HEK293 (cell line): ENCODE measurements at regions of chr19 and their contacts with region 1.

Region 1: GRCh38 chr19:55407800-55408532 is 378 bp upstream of the UBE2S start:
- H3K4me3 ChIP-seq: peak overlapping the region; percentile 96
- H3K27ac ChIP-seq: peak overlapping the region; percentile 99
- H3K4me1 ChIP-seq: peaks cover 9% of the 10 kb centered on the region
- CTCF ChIP-seq: no peak

Region 2: GRCh38 chr19:55146078-55146704 is 261.8 kb before region 1 on chr19:
- CTCF ChIA-PET with region 1: interaction called, 10 read pairs
- POLR2A ChIA-PET with region 1: interaction called, 11 read pairs
- H3K4me3 ChIP-seq: peak overlapping the region; percentile 46
- H3K27ac ChIP-seq: no peak overlapping the region
- H3K4me1 ChIP-seq: no peaks in the 10 kb centered on the region
- CTCF ChIP-seq: peak; percentile 61; the same call in 1 of the 2 replicates

Region 3: DNA sequence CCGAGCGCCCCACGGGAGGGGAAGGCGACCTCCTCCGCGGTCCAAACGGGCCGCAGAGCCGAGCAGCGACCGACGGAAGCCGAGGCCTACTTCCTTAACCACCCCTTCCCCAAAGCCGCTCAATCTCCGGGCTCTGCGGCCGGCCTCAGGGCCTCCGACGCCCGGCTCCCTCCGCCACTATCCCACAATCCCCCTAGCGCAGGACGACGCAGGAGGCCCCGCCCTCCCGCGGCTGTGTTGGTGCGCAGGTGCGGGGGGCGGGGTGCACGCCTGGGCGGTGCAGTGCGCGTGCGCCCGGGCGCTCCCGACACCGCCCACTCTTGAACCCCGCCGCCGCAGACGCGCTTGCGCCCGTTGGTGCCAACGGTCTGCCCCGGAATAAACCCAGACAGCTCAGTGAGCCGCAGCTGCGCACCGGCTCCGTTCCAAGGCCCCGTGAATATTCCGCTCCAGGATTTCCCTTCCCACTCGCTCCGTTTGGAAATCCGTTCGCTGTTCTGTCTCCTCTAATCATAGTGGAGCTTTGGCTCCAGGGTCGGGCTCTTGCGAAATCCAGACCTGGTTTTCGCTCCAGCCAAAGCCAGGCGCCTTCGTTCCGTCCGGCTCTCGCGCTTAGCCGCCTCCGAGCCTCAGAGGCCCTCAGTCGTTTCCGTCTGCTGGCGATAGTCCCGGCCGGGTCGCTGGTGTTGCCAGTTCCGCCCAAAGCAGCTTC is 149.0 kb before region 1 on chr19 and contains the start of gene PPP6R1:
- CTCF ChIA-PET with region 1: no interaction called
- POLR2A ChIA-PET with region 1: interaction called, 25 read pairs
- H3K4me3 ChIP-seq: peak within 1 kb of the TSS; percentile 96
- H3K27ac ChIP-seq: peak within 1 kb of the TSS; percentile 94
- H3K4me1 ChIP-seq: peaks cover 28% of the 10 kb centered on the region
- CTCF ChIP-seq: no peak

Region 4: DNA sequence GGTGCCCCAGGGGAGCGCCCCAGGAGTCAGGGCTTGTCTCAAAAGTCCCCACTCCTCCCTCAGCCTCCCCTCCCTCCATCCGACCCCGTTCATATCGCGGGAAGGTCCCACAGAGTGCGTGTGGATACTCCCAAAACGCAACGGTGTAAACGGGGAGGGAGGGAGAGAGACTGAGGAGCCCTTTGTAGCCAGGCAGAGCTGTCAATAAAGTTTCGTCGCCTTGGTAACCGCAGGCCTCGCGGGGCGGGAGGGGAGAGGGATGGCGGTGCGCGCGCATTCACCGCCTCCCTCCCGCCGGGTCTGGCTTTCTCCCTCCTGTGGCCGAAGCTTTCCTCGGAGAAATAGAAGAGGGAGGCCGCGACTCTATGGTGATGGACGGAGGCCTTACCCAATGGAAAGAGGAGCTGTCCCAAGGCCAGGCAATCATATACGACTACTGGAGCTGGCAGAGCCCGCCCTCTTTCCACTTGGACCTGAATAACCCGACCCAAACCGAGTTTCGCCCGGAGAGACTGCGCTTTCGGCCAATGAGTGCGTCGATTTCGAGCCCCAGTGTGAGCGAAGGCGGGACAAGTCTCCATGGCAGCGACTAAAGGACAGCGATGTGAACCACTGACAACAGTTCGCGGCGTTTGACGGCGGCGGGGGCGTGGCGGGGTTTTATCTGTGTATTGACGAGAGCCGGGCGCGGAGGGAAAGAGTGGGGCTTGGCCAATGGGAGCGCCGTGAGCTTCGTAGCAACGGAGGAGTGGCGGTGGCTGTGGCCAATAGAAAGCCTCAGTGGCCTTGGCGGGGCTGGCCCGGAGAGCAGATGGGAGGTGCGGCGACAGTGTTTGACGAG is 68.7 kb before region 1 on chr19 and contains the start of gene KMT5C:
- CTCF ChIA-PET with region 1: interaction called, 3 read pairs
- POLR2A ChIA-PET with region 1: interaction called, 67 read pairs
- H3K4me3 ChIP-seq: peak within 1 kb of the TSS; percentile 88
- H3K27ac ChIP-seq: peak within 1 kb of the TSS; percentile 89
- H3K4me1 ChIP-seq: peaks cover 14% of the 10 kb centered on the region
- CTCF ChIP-seq: no peak; the same call in 1 of the 2 replicates

Region 5: DNA sequence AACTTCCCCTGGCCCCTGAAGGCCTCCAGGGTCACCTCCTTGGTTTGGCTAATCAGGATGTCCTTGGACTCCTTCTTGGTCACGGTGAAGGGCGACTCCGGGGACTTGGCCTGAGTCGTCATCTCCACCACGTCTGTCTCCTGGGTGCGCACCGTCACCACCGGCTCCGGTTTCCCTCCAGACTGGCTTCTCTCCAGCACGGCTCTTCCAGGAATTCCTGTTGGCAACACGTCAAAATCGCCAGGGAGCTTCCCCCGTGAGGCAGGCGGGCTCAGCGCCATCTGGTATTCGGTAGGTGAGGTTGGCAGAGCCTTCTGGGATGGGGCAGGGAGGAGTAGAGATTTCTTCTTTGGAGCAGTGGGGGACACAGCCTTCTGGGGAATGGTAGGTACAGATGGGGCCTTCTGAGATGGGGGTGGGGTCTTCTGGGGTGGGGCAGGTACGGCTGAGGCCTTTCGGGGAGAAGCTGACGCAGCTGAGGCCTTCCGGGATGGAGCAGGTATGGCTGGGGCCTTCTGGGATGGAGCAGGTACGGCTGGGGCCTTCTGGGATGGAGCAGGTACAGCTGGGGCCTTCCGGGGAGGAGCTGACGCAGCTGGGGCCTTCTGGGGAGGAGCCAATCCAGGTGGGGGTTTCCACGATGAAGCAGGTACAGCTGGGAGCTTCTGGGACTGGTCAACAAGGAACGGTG is 48.9 kb before region 1 on chr19:
- CTCF ChIA-PET with region 1: no interaction called
- POLR2A ChIA-PET with region 1: no interaction called
- H3K4me3 ChIP-seq: no peak overlapping the region
- H3K27ac ChIP-seq: no peak overlapping the region
- H3K4me1 ChIP-seq: 0 out of 2 replicates have a peak, but pooled peaks cover 2% of the 10 kb centered on the region
- CTCF ChIP-seq: no peak

Region 6: DNA sequence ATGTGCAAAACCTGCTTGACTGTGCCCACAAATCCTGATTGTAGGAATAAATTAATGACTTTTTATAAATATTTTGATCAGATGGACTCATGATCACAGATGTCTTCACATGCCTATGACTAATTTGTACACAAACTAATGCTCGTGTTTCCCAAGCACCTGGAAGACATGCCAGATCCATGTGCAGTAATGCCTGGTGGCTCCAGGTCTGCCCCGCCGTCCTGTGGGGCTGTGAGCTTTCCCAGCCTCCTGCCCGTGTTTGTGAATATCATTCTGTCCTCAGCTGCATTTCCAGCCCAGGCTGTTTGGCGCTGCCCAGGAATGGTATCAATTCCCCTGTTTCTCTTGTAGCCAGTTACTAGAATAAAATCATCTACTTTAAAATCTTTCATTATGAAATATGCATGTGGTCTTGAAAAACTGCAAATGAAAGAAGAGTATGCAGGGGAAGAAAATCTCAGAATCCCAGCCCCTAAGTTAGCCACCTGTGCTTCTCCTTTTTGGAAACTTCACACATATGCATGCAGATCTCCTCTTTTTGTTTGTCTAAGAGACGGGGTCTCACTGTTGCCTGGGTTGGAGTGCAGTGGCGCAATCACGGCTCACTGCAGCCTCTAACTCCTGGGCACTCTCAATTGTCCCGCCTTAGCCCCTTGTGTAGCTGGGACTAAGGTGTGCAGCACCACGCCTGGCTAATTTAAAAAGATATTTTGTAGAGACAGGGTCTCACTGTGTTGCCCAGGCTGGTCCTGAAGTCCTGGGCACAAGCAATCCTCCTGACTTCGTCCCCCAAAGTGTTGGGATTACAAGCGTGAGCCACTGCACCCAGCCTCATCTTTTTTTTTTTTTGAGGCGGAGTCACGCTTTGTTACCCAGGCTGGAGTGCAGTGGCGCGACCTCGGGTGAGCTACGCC is 16.0 kb before region 1 on chr19:
- CTCF ChIA-PET with region 1: interaction called, 3 read pairs
- POLR2A ChIA-PET with region 1: interaction called, 78 read pairs
- H3K4me3 ChIP-seq: no peak overlapping the region
- H3K27ac ChIP-seq: no peak overlapping the region
- H3K4me1 ChIP-seq: peaks cover 24% of the 10 kb centered on the region
- CTCF ChIP-seq: no peak

Region 7: DNA sequence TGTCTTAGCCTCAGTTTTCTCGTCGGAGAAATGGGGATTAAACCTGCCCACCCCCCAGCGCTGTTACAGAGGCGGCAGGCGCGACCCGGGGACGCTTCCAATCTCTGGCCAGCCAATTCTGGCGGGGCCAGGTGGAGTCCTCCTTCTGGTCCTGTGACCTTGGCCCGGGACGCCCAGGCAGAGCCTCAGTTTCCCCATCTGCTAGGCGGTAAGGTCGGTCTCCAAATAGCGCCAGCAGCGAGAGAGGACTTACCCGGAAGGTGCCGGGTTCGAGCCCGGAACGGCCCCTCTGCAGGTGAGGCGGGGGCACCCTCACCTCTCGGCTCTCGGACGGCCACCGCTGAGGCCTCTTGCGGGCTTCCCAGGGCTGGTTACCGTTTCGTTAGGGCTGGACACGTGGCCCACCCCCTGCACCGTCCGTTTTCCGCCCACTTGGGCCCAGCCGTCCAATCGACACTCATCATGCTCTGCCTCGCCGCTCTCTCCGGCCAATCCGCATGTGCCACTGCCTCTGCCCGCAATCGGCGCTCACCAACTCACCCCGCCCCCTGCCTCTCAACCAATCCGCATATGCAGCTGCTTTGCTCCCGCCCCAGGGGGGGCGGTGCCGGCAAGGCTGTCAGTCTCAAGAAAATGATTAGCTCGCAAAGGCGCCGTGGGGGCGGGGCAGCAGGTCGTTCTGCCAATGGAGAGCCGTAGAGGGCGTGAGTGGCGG is 53.5 kb after region 1 on chr19 and contains the start of gene ISOC2:
- CTCF ChIA-PET with region 1: interaction called, 5 read pairs
- POLR2A ChIA-PET with region 1: interaction called, 20 read pairs
- H3K4me3 ChIP-seq: peak within 1 kb of the TSS; percentile 85
- H3K27ac ChIP-seq: peak within 1 kb of the TSS; percentile 56; the same call in 1 of the 2 replicates
- H3K4me1 ChIP-seq: peaks cover 12% of the 10 kb centered on the region
- CTCF ChIP-seq: no peak